Sciatic nerve (tissue), 2 donors: ENCODE measurements at regions of chr11 and their contacts with region 1.

Region 1: GRCh38 chr11:72722050-72722748 is 30.0 kb downstream of the ARAP1 start:
- DNase-seq: peak; percentile 90
- ATAC-seq: peak; percentile 90

Region 2: DNA sequence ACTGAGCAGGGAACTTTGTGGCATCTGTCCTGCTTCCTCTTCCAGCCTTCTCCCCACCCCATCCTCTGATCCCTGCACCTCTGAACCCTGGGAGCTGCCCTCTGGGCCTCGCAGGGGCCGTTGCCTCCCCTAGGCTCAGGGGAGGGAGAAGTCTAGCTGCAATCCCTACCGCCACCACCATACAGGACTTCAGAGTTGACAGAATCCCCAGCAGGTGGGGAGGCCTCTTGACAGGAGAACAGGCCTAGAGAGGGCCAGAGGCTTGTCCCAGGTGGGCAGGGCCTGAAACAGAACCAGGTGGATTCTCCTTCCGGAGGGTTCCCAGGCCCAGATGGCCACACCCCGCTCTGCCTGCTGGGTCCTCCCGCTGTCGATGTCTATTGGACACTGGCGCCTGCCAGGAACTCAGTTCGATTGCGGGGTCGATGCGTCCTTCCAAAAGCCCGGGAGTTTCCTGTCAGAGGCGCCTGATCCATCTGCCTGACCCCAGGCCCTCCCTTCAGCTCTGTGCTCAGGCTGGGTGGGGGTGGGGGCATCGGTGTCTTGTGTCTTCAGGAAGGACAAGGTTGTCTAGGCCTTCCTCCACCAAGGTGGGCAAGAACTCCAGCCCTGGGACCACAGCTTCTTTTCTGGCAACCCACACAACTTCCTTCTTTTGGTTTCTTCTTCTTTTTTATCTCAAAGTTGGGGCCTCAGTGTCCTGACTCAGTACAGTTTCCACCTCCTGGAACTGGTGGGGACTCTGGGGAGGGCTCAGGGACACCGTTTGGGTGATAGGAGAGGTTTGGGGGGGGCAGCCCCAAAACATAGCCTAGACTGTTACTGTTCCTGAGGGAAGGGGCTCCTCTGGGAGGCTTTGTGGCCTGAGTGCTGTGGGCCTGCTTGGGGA is 65.3 kb after region 1 on chr11:
- intact Hi-C with region 1: loop called (anchors 5 kb)
- DNase-seq: no peak
- ATAC-seq: peak; percentile 6

Region 3: GRCh38 chr11:73177778-73178577 is 455.8 kb after region 1 on chr11:
- intact Hi-C with region 1: loop called (anchors 10 kb)
- DNase-seq: peak; percentile 91
- ATAC-seq: peak; percentile 96